ENCODE measurements at regions of chr22 and their contacts with region 1.

Region 1: GRCh38 chr22:49946612-49947295 is 13.8 kb upstream of the PIM3 start:
- DNase-seq: no peak
- H3K4me3 Mint-ChIP-seq: no peak overlapping the region
- H3K27ac Mint-ChIP-seq: no peak overlapping the region
- H3K4me1 Mint-ChIP-seq: peaks cover 11% of the 10 kb centered on the region
- H3K27me3 Mint-ChIP-seq: no peaks in the 10 kb centered on the region

Region 2: GRCh38 chr22:49936018-49936952 is 10.5 kb before region 1 on chr22:
- CTCF ChIA-PET with region 1: interaction called, 10 read pairs
- POLR2A ChIA-PET with region 1: interaction called, 5 read pairs
- DNase-seq: peak; percentile 93
- H3K4me3 Mint-ChIP-seq: peak overlapping the region; percentile 67
- H3K27ac Mint-ChIP-seq: peak overlapping the region; percentile 92
- H3K4me1 Mint-ChIP-seq: peaks cover 31% of the 10 kb centered on the region
- H3K27me3 Mint-ChIP-seq: no peaks in the 10 kb centered on the region

Measured in activated CD4-positive, alpha-beta T cell treated with anti-CD3 and anti-CD28 coated beads, Interleukin-2, amount 10 ng/mL, durations not matched to agents 7 days and 5 days (primary cell).